IMR-90 (cell line): ENCODE measurements at regions of chr17 and their contacts with region 1.

Region 1: GRCh38 chr17:44199553-44200477 is at the start of gene ATXN7L3:
- DNase-seq: peak; percentile 97
- ATAC-seq: peak; percentile 84
- H3K4me3 ChIP-seq: peak within 1 kb of the TSS; percentile 85
- H3K27ac ChIP-seq: peak within 1 kb of the TSS; percentile 98
- H3K4me1 ChIP-seq: peaks cover 22% of the 10 kb centered on the region
- H3K27me3 ChIP-seq: no peaks in the 10 kb centered on the region
- CTCF ChIP-seq: no peak
- POLR2A ChIP-seq: peak; percentile 79
- RAD21 ChIP-seq: no peak
- total RNA-seq, gene ATXN7L3: 17.2 and 17.5 TPM in 2 replicates

Region 2: GRCh38 chr17:44324571-44325275 is 124.9 kb after region 1 on chr17 and contains the start of gene SLC25A39:
- CTCF ChIA-PET with region 1: no interaction called
- POLR2A ChIA-PET with region 1: no interaction called
- dilution Hi-C with region 1: no loop called
- in situ Hi-C with region 1: no loop called
- intact Hi-C with region 1: loop called (anchors 5 kb)
- DNase-seq: peak; percentile 93
- ATAC-seq: peak; percentile 95
- H3K4me3 ChIP-seq: peak within 1 kb of the TSS; percentile 88
- H3K27ac ChIP-seq: peak within 1 kb of the TSS; percentile 49
- H3K4me1 ChIP-seq: peaks cover 9% of the 10 kb centered on the region
- H3K27me3 ChIP-seq: no peaks in the 10 kb centered on the region
- CTCF ChIP-seq: no peak
- POLR2A ChIP-seq: peak; percentile 41; the same call in 1 of the 2 replicates
- RAD21 ChIP-seq: no peak
- total RNA-seq, gene SLC25A39: 49.1 and 49.2 TPM in 2 replicates

Region 3: GRCh38 chr17:44344939-44345453 is 145.2 kb after region 1 on chr17 and contains the start of gene GRN:
- CTCF ChIA-PET with region 1: interaction called, 3 read pairs
- POLR2A ChIA-PET with region 1: no interaction called
- dilution Hi-C with region 1: no loop called
- in situ Hi-C with region 1: no loop called
- intact Hi-C with region 1: loop called (anchors 5 kb)
- DNase-seq: peak; percentile 99
- ATAC-seq: peak; percentile 99
- H3K4me3 ChIP-seq: peak within 1 kb of the TSS; percentile 56
- H3K27ac ChIP-seq: peak within 1 kb of the TSS; percentile 7; the same call in 1 of the 2 replicates
- H3K4me1 ChIP-seq: peaks cover 4% of the 10 kb centered on the region; the same call in 1 of the 2 replicates
- H3K27me3 ChIP-seq: no peaks in the 10 kb centered on the region
- CTCF ChIP-seq: no peak
- POLR2A ChIP-seq: peak; percentile 87
- RAD21 ChIP-seq: no peak
- total RNA-seq, gene GRN: 38.9 and 39.2 TPM in 2 replicates